Posterior vena cava (tissue), 2 donors: ENCODE measurements at regions of chr17 and their contacts with region 1.

Region 1: GRCh38 chr17:35780951-35781350 is 14.5 kb downstream of the MMP28 start:
- DNase-seq: no peak

Region 2: GRCh38 chr17:35645923-35646322 is 135.0 kb before region 1 on chr17:
- intact Hi-C with region 1: no loop called
- DNase-seq: no peak

Region 3: GRCh38 chr17:35797370-35797769 is 16.4 kb after region 1 on chr17:
- intact Hi-C with region 1: loop called in 1 of 2 experiments (anchors 2 kb)
- DNase-seq: no peak

Region 4: DNA sequence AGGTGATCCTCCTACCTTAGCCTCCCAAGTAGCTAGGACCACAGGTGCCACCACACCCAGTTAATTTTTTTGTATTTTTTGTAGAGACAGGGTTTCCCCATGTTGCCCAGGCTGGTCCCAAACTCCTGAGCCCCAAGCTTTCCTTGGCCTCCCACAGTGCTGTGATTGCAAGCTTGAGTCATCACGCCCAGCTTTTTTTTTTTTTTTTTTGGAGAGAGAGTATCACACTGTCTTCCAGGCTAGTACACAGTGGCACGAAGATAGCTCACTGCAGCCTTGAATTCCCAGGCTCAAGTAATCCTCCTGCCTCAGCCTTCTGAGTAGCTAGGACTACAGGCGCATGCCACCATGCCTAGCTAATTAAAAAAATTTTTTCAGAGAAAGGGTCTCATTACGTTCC is 60.6 kb after region 1 on chr17:
- intact Hi-C with region 1: no loop called
- DNase-seq: no peak